Tibial artery (tissue), 4 donors: ENCODE measurements at regions of chr6 and their contacts with region 1.

Region 1: DNA sequence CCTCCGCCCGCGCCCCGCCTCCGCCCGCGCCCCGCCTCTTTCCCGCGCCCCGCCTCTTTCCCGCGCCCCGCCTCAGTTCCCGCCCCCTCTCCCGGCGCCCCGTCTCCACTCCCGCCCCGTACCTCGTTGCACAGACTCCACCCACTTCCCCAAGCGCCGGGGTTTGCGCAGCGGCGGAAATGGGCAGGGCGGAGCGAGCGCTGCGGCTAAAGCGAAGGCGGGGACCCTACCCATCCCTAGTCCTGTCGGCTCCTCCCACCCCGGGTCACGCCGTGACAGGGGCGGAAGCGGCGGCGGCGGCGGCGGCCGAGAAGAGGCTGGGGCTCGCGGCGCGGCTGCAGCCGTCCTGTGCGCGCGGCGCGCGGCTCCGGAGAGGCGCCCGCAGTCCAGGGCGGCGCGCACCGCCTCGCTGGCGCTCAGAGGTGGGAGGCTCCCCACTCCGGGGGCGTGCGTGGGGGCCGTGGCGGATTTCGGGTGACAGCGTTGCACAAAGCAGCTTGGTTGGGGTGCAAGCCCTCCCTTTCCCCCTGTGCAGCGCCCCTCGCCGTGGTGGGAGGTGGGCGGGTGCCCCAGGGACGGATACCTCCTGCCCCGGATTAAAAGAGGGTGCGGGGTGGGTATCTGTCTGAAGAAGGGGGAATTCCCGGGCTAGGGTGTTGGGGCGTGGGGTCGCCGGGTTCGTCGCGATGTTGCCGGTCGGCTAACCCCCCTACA is at the start of gene KDM1B:
- DNase-seq: peak; percentile 97 to 99
- H3K4me3 ChIP-seq: peak within 1 kb of the TSS; percentile 90 to 99
- H3K27ac ChIP-seq: peak within 1 kb of the TSS; percentile 80 to 86
- H3K4me1 ChIP-seq: peaks cover 0 to 18% (median 6%) of the 10 kb centered on the region in 4 donors
- H3K27me3 ChIP-seq: no peaks in the 10 kb centered on the region
- CTCF ChIP-seq: no peak

Region 2: GRCh38 chr6:17706580-17707370 is 448.5 kb before region 1 on chr6 and contains the start of gene NUP153:
- intact Hi-C with region 1: loop called (anchors 10 kb)
- DNase-seq: peak; percentile 98 to 99
- H3K4me3 ChIP-seq: peak within 1 kb of the TSS; percentile 90 to 95
- H3K27ac ChIP-seq: peak within 1 kb of the TSS; percentile 100
- H3K4me1 ChIP-seq: peaks cover 0 to 34% (median 30%) of the 10 kb centered on the region in 4 donors
- H3K27me3 ChIP-seq: no peaks in the 10 kb centered on the region
- CTCF ChIP-seq: peak in 1 of 2 experiments; percentile 20

Region 3: DNA sequence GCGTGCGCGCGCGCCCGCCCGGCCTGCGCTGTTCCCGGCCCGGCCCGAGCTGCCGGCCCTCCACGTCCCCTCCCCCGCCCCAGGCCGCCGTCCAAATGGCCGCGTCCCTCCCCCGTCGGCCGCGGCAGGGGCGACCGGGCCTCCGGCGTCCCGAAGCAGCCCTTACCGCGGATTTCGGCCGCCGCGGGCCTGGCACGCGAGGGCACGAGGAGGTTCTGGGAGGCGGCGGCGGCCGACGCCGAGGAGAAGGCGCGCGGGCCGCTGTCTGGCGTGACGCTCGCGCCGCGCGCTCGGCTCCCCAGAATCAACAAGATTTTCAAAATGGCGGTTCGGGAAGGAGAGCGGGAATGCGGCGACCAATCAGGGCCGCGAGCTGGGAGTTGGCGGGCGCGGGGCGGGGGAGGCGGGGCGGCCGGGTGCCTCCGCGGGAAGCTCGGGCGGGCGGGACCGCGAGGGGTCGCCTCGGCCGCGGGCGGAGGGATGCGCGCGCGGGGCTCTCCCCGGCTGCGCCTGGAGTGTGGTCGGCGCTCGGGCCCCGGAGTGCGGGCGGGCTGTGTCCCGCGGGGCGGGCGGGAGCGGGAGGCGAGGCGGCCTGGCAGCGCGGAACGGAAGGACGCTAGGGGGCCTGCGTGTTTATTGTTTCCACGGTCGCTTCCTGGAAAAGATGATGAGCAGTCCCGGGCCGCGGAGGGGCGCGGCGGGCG is 109.1 kb after region 1 on chr6 and contains the start of gene DEK:
- intact Hi-C with region 1: loop called (anchors 10 kb)
- DNase-seq: peak; percentile 83 to 91
- H3K4me3 ChIP-seq: peak within 1 kb of the TSS; percentile 86 to 99
- H3K27ac ChIP-seq: peak within 1 kb of the TSS; percentile 86 to 98
- H3K4me1 ChIP-seq: peaks cover 0 to 35% (median 24%) of the 10 kb centered on the region in 4 donors
- H3K27me3 ChIP-seq: no peaks in the 10 kb centered on the region
- CTCF ChIP-seq: peak; percentile 57 to 59